Activated naive CD4-positive, alpha-beta T cell treated with anti-CD3 and anti-CD28 coated beads for 36 hours (primary cell): ENCODE measurements at regions of chr10 and their contacts with region 1.

Region 1: DNA sequence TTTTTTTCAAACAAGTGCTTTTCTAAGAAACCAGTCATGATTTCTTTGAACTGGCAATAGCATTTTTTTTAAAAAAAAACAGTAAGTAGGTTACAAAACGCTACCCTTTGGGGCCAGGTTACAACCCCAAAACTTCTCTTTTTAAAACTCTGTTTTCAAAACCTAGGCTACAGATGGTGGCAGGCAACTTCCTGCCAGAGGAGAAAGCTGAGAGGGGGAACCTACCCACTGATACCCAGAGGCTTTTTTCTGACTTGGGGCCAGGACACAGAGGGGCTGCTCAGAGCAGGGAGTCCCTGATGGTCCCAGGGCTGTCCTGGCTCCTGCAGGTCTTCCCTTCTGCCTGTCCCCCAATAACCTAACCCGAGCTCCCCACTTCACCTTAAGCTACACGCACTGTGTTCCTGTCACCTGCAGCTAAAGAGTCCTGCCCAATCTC is 6.9 kb downstream of the STN1 start:
- DNase-seq: peak; percentile 57
- H3K4me3 Mint-ChIP-seq: peak overlapping the region; percentile 60
- H3K27ac Mint-ChIP-seq: peak overlapping the region; percentile 94
- H3K4me1 Mint-ChIP-seq: peaks cover 72% of the 10 kb centered on the region
- H3K27me3 Mint-ChIP-seq: no peaks in the 10 kb centered on the region

Region 2: DNA sequence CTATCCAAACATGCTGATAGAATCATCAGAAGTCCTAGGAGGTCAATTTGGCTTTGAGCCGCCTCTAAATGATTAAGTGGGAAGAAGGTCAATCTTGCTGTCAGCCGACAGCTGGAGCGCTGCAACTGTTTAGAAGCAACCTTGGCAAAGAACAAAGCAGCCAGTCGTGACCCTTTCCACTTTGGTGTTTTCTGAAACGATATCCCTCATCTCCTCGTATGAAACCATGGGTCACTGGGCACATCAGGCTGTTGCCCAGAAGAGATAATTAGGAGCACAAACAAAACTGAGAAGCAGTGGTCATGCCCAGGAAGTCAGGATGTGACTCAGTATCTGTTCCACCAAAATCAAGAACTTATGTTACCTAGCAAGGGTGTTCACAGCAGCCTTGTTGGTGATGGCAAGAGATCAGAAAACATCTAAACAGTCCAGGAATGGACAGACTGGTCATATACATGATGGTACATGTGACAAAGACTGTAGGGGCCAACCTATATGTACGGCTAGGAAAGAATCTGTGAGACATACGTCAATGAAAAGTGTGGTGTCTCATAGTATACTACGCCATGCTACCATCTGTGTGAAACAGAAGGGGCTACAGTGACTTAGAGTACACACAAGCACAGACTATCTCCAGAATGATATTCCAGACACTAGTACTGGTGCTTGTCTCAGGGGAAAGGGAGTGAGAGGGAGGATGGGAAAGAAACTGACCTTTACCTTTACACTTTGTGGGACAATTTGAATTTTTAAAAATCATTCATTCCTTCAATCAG is 15.4 kb before region 1 on chr10:
- CTCF ChIA-PET with region 1: interaction called, 4 read pairs
- intact Hi-C with region 1: loop called (anchors 2 kb)
- DNase-seq: peak; percentile 32
- H3K4me3 Mint-ChIP-seq: no peak overlapping the region
- H3K27ac Mint-ChIP-seq: peak overlapping the region; percentile 84
- H3K4me1 Mint-ChIP-seq: peaks cover 37% of the 10 kb centered on the region
- H3K27me3 Mint-ChIP-seq: no peaks in the 10 kb centered on the region

Region 3: DNA sequence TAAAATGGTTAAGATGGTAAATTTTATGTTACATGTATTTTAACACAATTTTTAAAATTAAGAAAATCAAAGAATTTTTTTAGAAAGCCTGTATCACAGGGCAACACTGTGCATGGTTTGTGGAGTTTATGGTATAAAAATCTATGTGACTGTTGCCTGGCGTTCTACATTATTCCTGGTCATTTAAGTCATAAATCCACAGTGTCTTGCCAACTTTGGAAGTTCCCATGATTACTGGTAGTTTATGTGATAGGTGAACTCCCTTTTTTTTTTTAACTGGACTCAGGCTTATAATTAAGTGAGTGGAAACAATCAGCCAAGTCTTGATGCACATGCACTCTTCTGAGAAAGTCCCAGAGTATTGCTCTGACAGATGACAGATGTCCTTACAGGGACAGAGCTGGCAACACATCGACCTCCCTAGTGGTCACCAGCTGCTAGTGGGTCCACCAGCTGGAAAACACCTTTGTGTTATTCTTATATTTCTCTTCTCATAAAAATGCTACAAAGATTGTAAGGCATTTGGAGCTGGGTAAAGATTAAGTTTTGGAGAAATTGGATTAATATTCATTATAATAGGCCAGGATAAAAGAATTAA is 15.8 kb after region 1 on chr10:
- CTCF ChIA-PET with region 1: no interaction called
- intact Hi-C with region 1: no loop called
- DNase-seq: no peak
- H3K4me3 Mint-ChIP-seq: no peak overlapping the region
- H3K27ac Mint-ChIP-seq: no peak overlapping the region
- H3K4me1 Mint-ChIP-seq: no peaks in the 10 kb centered on the region
- H3K27me3 Mint-ChIP-seq: no peaks in the 10 kb centered on the region

Region 4: DNA sequence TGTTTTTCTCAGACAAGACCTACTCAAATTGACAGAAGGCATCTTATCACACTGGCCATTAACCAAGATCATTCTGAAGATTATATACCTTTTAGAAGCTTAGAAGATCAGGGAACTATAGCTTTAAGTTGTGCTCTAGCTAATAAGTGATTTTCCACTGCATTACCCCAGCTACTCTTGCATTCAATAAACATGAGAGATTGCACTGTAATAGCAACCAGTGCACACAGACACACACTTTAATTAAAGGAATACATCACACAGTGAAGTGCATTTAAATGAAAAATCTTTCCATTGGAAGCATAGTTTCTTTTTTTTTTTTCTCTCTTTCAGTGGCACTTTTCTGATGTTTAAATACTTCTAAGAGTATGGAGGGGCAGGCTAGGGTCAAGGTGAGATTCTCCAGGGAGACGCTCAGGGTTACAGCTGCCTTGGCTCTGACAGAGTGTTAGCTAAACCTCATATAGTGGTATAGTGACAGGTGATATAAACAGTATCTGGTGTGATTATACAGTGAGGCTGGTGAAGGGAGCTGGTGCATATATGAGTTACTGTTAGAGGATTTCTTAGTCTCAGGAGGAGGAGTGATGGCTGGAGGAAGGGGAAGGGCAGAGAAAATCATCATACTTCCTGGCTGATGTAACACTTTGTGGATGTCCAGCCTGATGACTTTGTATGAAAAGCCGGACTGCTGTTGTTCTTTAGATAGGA is 1099.5 kb after region 1 on chr10:
- CTCF ChIA-PET with region 1: no interaction called
- intact Hi-C with region 1: no loop called
- DNase-seq: no peak
- H3K4me3 Mint-ChIP-seq: no peak overlapping the region
- H3K27ac Mint-ChIP-seq: no peak overlapping the region
- H3K4me1 Mint-ChIP-seq: peaks cover 10% of the 10 kb centered on the region
- H3K27me3 Mint-ChIP-seq: no peaks in the 10 kb centered on the region